ENCODE measurements at regions of chr11 and their contacts with region 1.

Region 1: DNA sequence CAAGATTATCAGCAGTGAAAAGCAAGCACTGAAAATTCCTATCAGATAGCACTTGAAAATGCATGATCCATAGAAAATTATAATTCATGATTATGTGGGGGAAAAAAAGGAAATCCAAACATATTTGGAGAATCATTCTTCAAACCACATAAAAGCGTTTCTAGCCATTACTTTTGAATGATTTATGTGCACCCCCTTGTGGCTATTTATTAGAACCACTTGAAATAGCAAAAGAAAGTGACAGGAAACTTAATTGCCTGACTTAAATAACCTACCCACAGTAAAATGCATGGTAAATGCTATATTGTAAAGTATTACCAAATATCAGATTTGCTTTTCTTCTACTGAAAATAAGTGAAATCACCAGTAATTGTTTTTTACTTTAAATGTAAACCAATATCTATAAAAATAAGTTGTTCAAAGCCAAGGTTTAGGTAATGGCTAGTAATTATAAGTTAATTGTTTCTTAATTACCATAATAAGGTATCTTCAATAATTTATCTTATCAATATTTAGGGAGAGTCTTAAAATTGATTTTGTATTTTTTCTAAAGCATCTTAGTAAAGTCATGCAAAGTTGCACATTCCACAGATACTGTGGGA is 168.5 kb downstream of the ARHGAP42 start:
- DNase-seq: no peak
- ATAC-seq: peak; percentile 33
- H3K4me3 ChIP-seq: no peak overlapping the region
- H3K27ac ChIP-seq: no peak overlapping the region
- H3K4me1 ChIP-seq: no peaks in the 10 kb centered on the region
- H3K27me3 ChIP-seq: no peaks in the 10 kb centered on the region
- CTCF ChIP-seq: peak; percentile 58

Region 2: GRCh38 chr11:100592619-100593260 is 262.8 kb before region 1 on chr11:
- intact Hi-C with region 1: loop called (anchors 10 kb)
- DNase-seq: no peak
- ATAC-seq: no peak
- H3K4me3 ChIP-seq: no peak overlapping the region
- H3K27ac ChIP-seq: no peak overlapping the region
- H3K4me1 ChIP-seq: no peaks in the 10 kb centered on the region
- H3K27me3 ChIP-seq: no peaks in the 10 kb centered on the region
- CTCF ChIP-seq: no peak

Region 3: GRCh38 chr11:100681064-100681502 is 174.5 kb before region 1 on chr11:
- intact Hi-C with region 1: loop called (anchors 5 kb)
- DNase-seq: peak; percentile 73
- ATAC-seq: peak; percentile 94
- H3K4me3 ChIP-seq: no peak overlapping the region
- H3K27ac ChIP-seq: no peak overlapping the region
- H3K4me1 ChIP-seq: no peaks in the 10 kb centered on the region
- H3K27me3 ChIP-seq: no peaks in the 10 kb centered on the region
- CTCF ChIP-seq: no peak

Measured in upper lobe of right lung (tissue), 1 donor.